Caco-2 (cell line): ENCODE measurements at regions of chr4 and their contacts with region 1.

Region 1: DNA sequence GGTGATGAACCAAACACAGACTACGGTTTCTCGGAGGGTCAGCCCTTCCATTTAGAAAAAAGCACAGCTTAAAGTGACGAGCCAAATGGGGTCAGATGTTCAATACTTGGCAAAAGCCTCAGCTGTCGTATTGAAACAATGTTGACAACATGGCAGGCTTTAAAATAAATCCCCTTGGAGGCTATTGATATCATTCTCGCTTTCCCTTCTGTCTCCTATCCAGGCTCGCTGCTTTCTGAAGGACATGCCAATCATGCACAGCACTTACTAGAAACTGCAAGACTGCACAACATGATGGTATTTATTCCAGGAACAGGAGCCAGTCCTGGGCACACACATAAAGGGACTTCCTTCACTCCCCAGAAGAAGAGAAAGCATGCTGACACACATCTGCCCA is 137.9 kb downstream of the SLC7A11 start:
- DNase-seq: no peak
- H3K4me3 ChIP-seq: no peak overlapping the region
- H3K4me3 Mint-ChIP-seq: no peak overlapping the region
- H3K27ac Mint-ChIP-seq: no peak overlapping the region
- H3K4me1 ChIP-seq: peaks cover 21% of the 10 kb centered on the region
- H3K4me1 Mint-ChIP-seq: no peaks in the 10 kb centered on the region
- H3K27me3 ChIP-seq: no peaks in the 10 kb centered on the region
- H3K27me3 Mint-ChIP-seq: no peaks in the 10 kb centered on the region
- CTCF ChIP-seq: no peak

Region 2: GRCh38 chr4:138162259-138162658 is 58.0 kb after region 1 on chr4:
- CTCF ChIA-PET with region 1: no interaction called
- POLR2A ChIA-PET with region 1: no interaction called
- intact Hi-C with region 1: loop called (anchors 5 kb)
- DNase-seq: no peak
- H3K4me3 ChIP-seq: no peak overlapping the region
- H3K4me3 Mint-ChIP-seq: no peak overlapping the region
- H3K27ac Mint-ChIP-seq: no peak overlapping the region
- H3K4me1 ChIP-seq: no peaks in the 10 kb centered on the region
- H3K4me1 Mint-ChIP-seq: no peaks in the 10 kb centered on the region
- H3K27me3 ChIP-seq: no peaks in the 10 kb centered on the region
- H3K27me3 Mint-ChIP-seq: no peaks in the 10 kb centered on the region
- CTCF ChIP-seq: no peak